Activated T-helper 2 cell treated with anti-CD3 and anti-CD28 coated beads, Interferon-gamma antibody, Interleukin-2, Interleukin-4, amounts not matched to agents 10 μg/mL and 5 μg/mL and 100 μg/mL, durations not matched to agents 14 hours and 24 hours and 36 hours (primary cell): ENCODE measurements at regions of chr1 and their contacts with region 1.

Region 1: DNA sequence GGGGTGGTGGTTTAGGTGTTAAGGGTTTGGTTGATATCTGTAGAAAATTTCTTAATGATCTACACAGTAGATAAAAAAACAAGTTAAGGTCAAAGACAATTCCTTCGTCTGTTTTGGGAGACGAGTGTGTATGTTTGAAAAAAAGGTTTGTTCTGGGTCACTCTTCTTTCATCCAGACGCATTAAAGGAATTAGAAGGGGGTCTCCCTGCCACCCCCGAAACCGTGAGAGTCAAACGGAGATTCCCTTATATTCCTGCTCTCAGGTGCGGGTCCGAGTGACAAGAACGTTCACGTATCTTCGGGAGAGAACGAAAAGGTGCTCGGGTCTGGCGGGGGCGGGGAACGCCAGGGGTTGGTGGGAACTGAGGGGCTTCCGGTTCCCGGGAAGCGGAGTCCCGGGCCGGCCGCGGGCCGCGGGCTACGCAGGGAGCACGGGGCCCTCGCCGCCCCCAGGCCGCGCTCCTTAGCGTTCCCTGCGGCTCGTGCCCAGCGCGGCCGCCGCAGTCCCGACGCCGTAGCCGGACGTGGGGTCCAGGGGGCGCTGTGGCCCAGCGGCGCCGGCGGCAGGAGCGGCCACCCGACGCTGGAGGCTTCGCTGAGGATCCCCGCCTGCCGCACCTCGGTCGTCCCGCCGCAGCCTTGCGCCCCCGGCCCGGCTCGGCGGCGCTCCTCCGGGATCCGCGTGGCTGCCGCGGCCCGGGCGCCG is at the start of gene ZFYVE9:
- DNase-seq: peak; percentile 57
- H3K4me3 Mint-ChIP-seq: peak within 1 kb of the TSS; percentile 76
- H3K27ac Mint-ChIP-seq: peak within 1 kb of the TSS; percentile 56
- H3K4me1 Mint-ChIP-seq: peaks cover 27% of the 10 kb centered on the region
- H3K27me3 Mint-ChIP-seq: peaks cover 28% of the 10 kb centered on the region
- total RNA-seq, gene ZFYVE9: 3.7 and 4.0 TPM in 2 replicates

Region 2: DNA sequence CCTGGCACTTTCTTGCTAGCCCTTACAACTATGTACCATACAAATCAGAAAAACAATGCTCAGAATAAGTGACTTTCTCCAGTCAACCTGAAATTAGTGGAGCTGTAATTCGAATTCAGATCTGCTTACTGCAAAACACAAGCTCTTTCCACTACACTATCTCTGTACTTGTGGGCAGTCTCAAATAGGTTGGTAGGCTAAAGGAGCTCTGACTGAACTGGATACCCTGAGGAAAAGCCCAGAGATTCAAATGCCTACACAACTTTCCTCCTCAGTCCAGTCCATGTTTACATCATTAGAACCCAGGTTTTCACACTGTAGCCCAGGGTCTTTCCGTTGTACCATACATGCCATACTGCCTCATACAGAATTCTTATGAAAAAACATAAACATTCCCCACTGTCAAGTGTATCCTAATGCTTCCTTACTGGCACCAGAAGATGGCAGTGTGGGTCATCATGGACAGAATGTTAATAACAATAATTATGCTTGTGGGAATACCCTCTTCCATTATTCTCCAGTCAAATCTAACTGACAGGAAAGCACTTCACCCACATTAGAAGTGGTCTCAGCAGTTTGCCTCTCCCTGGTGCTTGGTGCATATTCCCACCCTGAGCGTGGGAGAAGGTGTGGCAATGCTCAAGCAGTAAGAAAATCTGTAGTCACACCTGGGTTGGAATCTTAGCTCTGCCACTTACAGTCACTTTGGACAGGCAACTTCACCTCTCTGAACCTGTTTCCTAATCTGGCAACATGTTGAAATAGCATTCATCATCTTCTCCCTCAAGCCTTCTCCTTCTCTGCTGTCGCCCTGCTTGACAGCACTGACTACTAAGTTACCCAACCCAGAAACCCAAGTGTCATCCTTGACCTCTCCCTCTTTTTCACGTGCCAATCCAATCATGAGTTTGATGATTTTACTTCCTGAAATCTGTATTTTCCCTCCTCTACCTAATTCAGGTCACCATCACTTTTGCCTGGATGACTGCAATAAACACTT is 14.2 kb before region 1 on chr1:
- intact Hi-C with region 1: no loop called
- DNase-seq: no peak
- H3K4me3 Mint-ChIP-seq: no peak overlapping the region
- H3K27ac Mint-ChIP-seq: no peak overlapping the region
- H3K4me1 Mint-ChIP-seq: peaks cover 4% of the 10 kb centered on the region
- H3K27me3 Mint-ChIP-seq: peaks cover 37% of the 10 kb centered on the region

Region 3: DNA sequence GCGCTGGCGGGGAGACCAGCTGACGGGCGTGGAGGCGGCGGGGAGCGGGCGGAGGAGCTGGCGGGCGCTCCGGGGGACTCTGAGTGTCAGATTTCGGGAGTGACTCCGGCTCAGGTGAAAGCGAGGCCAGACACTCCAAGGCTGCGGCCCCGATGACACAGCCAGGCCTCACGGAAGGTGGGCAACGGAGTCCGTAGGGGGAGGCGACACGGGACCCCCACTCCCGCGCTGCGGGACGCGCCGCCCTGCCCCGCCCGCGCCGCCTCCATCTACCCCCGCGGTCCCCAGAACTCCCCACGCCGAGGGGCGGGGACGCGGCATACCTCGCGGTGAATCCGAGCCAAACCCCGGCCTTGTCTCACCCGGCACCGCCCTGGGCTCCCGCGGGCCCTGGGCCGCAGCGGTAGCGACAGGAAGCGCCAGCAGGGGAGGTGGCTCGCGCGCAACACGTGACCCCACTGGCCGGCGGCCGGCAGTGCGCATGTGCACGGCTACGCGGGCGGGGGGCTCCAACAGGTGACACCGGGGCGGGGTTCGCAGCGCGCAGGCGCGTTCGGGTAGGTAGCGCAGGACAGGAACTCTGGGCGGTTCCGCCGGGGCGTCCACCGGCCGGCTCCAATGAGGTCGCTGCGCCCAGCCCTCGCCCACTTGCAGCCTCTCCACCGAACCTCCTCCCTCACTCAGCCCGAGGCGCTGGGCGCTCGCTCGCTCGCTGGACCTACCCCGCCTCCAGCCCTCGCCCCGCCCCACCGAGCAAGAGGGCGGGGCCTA is 224.3 kb after region 1 on chr1 and contains the start of gene CC2D1B:
- intact Hi-C with region 1: loop called (anchors 10 kb)
- DNase-seq: peak; percentile 100
- H3K4me3 Mint-ChIP-seq: peak within 1 kb of the TSS; percentile 94
- H3K27ac Mint-ChIP-seq: peak within 1 kb of the TSS; percentile 93
- H3K4me1 Mint-ChIP-seq: peaks cover 34% of the 10 kb centered on the region
- H3K27me3 Mint-ChIP-seq: no peaks in the 10 kb centered on the region
- total RNA-seq, gene CC2D1B: 36.0 and 38.1 TPM in 2 replicates

Region 4: GRCh38 chr1:52520148-52520547 is 378.5 kb after region 1 on chr1:
- intact Hi-C with region 1: loop called (anchors 10 kb)
- DNase-seq: no peak
- H3K4me3 Mint-ChIP-seq: no peak overlapping the region
- H3K27ac Mint-ChIP-seq: peak overlapping the region; percentile 38
- H3K4me1 Mint-ChIP-seq: peaks cover 37% of the 10 kb centered on the region
- H3K27me3 Mint-ChIP-seq: no peaks in the 10 kb centered on the region

Region 5: DNA sequence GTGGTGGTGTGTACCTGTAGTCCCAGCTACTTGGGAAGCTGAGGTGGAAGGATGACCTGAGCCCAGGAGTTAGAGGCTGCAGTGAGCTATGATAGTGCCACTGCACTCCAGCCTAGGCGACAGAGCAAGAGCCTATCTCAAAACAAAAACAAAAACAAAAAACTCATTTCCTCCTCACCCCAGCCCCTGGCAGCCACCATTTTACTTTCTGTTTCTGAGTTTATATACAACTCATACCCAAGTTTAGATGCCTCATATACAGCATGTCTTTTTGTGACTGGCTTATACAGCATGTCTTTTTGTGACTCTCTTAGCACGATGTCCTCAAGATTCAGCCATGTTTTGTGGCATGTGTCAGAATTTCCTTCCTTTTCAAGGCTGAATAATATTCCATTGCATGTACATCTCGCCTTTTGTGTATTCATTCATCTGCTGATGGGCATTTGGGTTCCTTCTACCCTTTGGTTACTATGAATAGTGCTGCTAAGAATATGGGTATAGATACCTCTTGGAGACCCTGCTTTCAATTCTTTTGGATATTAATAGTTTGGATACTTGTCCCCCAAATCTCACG is 541.8 kb after region 1 on chr1:
- intact Hi-C with region 1: loop called (anchors 10 kb)
- DNase-seq: no peak
- H3K4me3 Mint-ChIP-seq: no peak overlapping the region
- H3K27ac Mint-ChIP-seq: no peak overlapping the region
- H3K4me1 Mint-ChIP-seq: peaks cover 9% of the 10 kb centered on the region
- H3K27me3 Mint-ChIP-seq: no peaks in the 10 kb centered on the region